WTC11 (cell line): ENCODE measurements at regions of chr7 and their contacts with region 1.

Region 1: DNA sequence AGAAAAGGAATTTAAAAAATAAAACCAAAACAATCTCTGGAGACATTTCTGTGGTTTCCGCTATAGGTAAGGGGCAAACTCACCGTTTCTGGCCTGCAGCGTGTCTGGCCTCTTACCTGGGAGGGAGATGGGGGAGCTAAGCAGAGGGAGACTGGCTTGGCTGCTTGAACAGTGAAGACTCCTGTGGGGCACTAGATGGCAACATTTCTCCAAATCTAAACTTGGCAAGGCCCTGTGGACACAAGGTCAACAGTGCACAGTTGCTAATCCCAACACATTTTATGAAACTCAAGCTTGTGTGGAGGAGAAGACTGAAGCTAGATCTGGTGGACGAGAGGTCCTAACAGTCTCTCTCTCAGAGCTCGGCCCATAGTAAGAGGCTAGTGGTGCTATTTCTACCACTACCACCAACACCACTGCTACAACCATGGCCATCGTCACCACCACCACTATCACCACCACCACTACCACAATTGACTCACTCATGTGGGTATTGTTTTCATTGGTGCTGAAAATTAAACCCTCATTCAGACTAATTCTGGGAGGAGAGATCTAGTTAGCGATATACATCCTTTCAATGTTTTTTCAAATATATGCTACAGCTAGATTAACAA is 28.4 kb upstream of the CDHR3 start:
- DNase-seq: peak; percentile 37
- ATAC-seq: peak; percentile 94
- H3K4me3 Mint-ChIP-seq: no peak overlapping the region
- H3K27ac Mint-ChIP-seq: no peak overlapping the region
- H3K4me1 Mint-ChIP-seq: peaks cover 25% of the 10 kb centered on the region
- H3K27me3 Mint-ChIP-seq: no peaks in the 10 kb centered on the region
- CTCF ChIP-seq: no peak

Region 2: GRCh38 chr7:105759670-105760550 is 174.8 kb before region 1 on chr7:
- CTCF ChIA-PET with region 1: interaction called, 11 read pairs
- POLR2A ChIA-PET with region 1: no interaction called
- DNase-seq: peak; percentile 38
- ATAC-seq: no peak; the same call in 1 of the 2 replicates
- H3K4me3 Mint-ChIP-seq: no peak overlapping the region
- H3K27ac Mint-ChIP-seq: peak overlapping the region; percentile 61
- H3K4me1 Mint-ChIP-seq: peaks cover 38% of the 10 kb centered on the region
- H3K27me3 Mint-ChIP-seq: no peaks in the 10 kb centered on the region
- CTCF ChIP-seq: no peak

Region 3: GRCh38 chr7:105978035-105978434 is 43.4 kb after region 1 on chr7:
- CTCF ChIA-PET with region 1: interaction called, 11 read pairs
- POLR2A ChIA-PET with region 1: no interaction called
- DNase-seq: no peak
- ATAC-seq: no peak
- H3K4me3 Mint-ChIP-seq: no peak overlapping the region
- H3K27ac Mint-ChIP-seq: no peak overlapping the region
- H3K4me1 Mint-ChIP-seq: peaks cover 34% of the 10 kb centered on the region
- H3K27me3 Mint-ChIP-seq: no peaks in the 10 kb centered on the region; the same call in 1 of the 2 replicates
- CTCF ChIP-seq: no peak

Region 4: GRCh38 chr7:106009403-106010226 is 74.9 kb after region 1 on chr7:
- CTCF ChIA-PET with region 1: interaction called, 26 read pairs
- POLR2A ChIA-PET with region 1: no interaction called
- DNase-seq: peak; percentile 95
- ATAC-seq: peak; percentile 94
- H3K4me3 Mint-ChIP-seq: peak overlapping the region; percentile 56
- H3K27ac Mint-ChIP-seq: peak overlapping the region; percentile 98
- H3K4me1 Mint-ChIP-seq: peaks cover 20% of the 10 kb centered on the region
- H3K27me3 Mint-ChIP-seq: peaks cover 30% of the 10 kb centered on the region
- CTCF ChIP-seq: peak; percentile 97

Region 5: DNA sequence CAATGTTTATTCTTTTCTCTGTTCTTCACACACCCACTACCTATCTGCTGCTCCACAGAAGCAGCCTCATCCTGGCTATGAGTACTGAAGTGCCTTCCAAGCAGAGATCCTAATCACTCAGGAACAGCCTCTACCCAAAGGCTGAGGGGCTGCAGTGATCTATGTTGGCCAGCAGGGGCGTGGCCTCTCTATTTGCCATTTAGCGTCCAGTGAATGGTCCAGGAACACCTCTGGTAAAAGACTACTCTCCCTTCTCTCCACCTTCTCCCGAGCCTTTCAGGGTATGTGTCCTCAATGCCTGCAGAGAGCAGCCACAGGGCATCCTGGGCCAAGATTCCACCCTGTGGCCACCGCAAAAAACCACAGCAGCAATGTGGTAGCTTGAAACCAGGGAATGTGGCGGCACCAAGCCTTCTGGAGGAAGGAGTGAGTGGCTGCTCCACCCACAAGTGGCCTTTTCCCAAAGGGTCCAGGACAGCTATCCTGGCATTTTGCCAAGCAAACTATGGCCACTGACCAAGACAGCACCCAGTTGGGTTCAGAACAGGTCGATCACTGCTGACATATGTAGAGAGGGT is 106.5 kb after region 1 on chr7:
- CTCF ChIA-PET with region 1: interaction called, 19 read pairs
- POLR2A ChIA-PET with region 1: no interaction called
- DNase-seq: peak; percentile 72
- ATAC-seq: peak; percentile 71
- H3K4me3 Mint-ChIP-seq: no peak overlapping the region
- H3K27ac Mint-ChIP-seq: no peak overlapping the region
- H3K4me1 Mint-ChIP-seq: peaks cover 23% of the 10 kb centered on the region
- H3K27me3 Mint-ChIP-seq: no peaks in the 10 kb centered on the region; the same call in 1 of the 2 replicates
- CTCF ChIP-seq: peak; percentile 97

Region 6: DNA sequence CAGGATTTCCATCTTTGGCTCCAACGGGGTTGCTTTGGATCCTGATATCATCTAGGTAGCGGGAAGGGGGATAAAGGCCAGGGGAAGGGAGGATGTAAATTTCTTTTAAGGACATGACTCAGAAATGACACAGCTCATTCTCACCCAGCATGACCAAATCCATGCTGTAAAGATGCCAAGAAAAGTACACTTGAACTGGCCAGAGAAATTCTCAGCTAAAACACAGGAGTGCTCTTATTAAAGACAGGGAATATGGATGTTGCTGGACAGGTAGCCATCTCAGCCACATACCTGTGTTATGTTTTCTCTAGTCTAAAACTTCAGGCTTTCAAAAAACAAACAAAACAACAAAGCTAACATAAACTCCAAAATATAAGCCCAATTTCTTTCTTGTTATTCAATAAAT is 281.8 kb after region 1 on chr7:
- CTCF ChIA-PET with region 1: no interaction called
- POLR2A ChIA-PET with region 1: no interaction called
- DNase-seq: no peak
- ATAC-seq: no peak
- H3K4me3 Mint-ChIP-seq: no peak overlapping the region
- H3K27ac Mint-ChIP-seq: no peak overlapping the region
- H3K4me1 Mint-ChIP-seq: no peaks in the 10 kb centered on the region
- H3K27me3 Mint-ChIP-seq: peaks cover 5% of the 10 kb centered on the region
- CTCF ChIP-seq: no peak